ENCODE measurements at regions of chr6 and their contacts with region 1.

Region 1: DNA sequence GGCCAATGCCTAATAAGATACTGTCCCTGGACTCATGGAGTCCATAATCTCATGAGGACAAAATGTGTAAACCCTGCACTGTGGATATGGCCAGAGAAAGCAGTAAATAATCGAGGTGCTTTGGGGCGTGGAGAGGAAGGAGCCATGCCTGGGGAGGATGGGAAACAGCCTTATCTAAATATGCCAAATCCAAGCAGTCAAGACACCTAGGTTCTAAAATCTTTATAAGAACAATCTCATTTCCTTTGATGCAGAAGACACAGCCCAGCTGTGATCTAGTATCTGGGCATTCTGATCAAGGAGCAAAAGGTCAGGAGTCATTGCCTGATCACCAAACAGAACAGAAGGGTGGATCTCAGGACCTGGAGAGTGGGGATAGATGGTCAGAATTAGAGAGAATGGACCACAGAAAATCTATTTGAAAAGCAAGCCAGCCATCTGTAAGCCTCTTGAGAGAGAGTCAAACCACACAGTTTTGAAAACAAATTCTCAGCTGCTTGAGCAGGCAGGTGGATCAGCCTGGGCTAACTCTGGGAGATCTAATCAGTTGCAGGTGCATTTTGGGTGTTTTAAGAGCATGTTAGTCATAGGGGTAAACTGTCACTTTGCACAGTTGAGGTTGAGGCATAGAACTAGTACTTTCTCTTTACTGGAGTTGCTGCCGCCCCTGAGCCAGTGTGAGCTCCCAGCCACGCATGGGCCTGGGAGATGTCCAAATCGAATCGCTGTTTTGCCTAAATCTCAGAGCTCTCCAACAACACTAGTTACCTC is 130.8 kb upstream of the TNFAIP3 start:
- DNase-seq: peak; percentile 45 to 71 (median 51)
- H3K4me3 ChIP-seq: no peak overlapping the region
- H3K4me3 Mint-ChIP-seq: peak overlapping the region in 6 of 8 donors; percentile 10 to 61 (median 48)
- H3K27ac ChIP-seq: peak overlapping the region; percentile 18
- H3K27ac Mint-ChIP-seq: peak overlapping the region; percentile 58 to 97 (median 91)
- H3K4me1 ChIP-seq: peaks cover 16% of the 10 kb centered on the region
- H3K4me1 Mint-ChIP-seq: peaks cover 10 to 14% (median 13%) of the 10 kb centered on the region in 4 donors
- H3K27me3 ChIP-seq: no peaks in the 10 kb centered on the region
- H3K27me3 Mint-ChIP-seq: no peaks in the 10 kb centered on the region

Region 2: DNA sequence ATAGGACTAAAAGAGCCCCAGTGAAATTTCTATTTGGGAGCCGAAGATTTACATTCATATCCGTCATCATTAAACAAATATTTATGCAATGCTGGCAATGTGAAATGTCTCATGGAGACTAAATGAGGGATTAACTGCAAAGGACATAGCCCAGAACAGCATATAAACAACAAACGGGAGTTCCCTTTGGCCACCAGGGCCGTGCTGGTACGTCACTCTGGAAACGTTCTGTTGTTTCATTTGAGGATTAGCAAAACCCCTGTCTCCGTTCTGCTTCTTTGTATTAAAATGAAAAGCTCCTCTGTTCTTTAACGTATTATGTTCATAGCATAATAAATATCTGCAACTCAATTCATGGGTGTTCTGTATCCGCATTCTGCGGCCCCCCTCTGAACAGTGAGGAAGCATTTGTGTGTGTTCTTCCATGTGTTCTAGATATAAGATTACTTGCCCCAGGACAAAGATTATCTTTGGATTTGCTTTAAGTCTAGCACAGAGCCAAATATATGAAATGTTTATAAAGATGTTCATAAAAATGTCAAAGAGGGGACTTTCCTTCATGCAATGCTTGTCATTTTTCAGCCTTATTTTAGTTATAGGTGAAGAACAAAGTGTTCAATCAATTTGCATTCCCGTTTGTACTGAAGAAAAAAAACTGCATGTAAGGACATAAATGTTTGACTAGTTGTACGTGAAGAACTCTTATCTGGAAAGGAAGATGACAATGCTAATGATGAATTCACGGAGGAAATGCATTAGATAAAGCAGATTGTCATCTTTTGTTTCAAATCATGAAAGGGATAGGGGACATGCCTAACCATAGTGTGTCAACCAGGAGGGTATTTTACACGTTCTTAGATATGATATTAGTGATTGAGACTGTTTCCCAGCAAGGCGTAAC is 40.8 kb after region 1 on chr6:
- CTCF ChIA-PET with region 1: no interaction called
- POLR2A ChIA-PET with region 1: no interaction called
- intact Hi-C with region 1: loop called (anchors 5 kb)
- DNase-seq: no peak
- H3K4me3 ChIP-seq: no peak overlapping the region
- H3K4me3 Mint-ChIP-seq: no peak overlapping the region
- H3K27ac ChIP-seq: no peak overlapping the region
- H3K27ac Mint-ChIP-seq: peak overlapping the region in 2 of 7 donors; percentile 60 to 66
- H3K4me1 ChIP-seq: no peaks in the 10 kb centered on the region
- H3K4me1 Mint-ChIP-seq: peaks cover 0 to 4% (median 0%) of the 10 kb centered on the region in 4 donors
- H3K27me3 ChIP-seq: no peaks in the 10 kb centered on the region
- H3K27me3 Mint-ChIP-seq: no peaks in the 10 kb centered on the region

Measured in CD4-positive, alpha-beta memory T cell (primary cell).